B cell (primary cell): ENCODE measurements at regions of chr4 and their contacts with region 1.

Region 1: GRCh38 chr4:163663454-163664225 is 169.2 kb downstream of the TMA16 start:
- DNase-seq: peak; percentile 84
- ATAC-seq: peak; percentile 71
- H3K4me3 ChIP-seq: peak overlapping the region in 3 of 5 experiments; percentile 6 to 48 (median 32)
- H3K4me3 Mint-ChIP-seq: peak overlapping the region; percentile 84
- H3K27ac ChIP-seq: peak overlapping the region; percentile 93 to 94
- H3K27ac Mint-ChIP-seq: peak overlapping the region; percentile 98
- H3K4me1 ChIP-seq: peaks cover 69 to 72% of the 10 kb centered on the region in 2 donors
- H3K4me1 Mint-ChIP-seq: peaks cover 75% of the 10 kb centered on the region
- H3K27me3 ChIP-seq: no peaks in the 10 kb centered on the region
- H3K27me3 Mint-ChIP-seq: no peaks in the 10 kb centered on the region
- CTCF ChIP-seq: no peak

Region 2: GRCh38 chr4:162046135-162046534 is 1617.5 kb before region 1 on chr4:
- CTCF ChIA-PET with region 1: no interaction called
- POLR2A ChIA-PET with region 1: no interaction called
- intact Hi-C with region 1: no loop called
- DNase-seq: no peak
- ATAC-seq: no peak
- H3K4me3 ChIP-seq: no peak overlapping the region
- H3K4me3 Mint-ChIP-seq: no peak overlapping the region
- H3K27ac ChIP-seq: no peak overlapping the region
- H3K27ac Mint-ChIP-seq: no peak overlapping the region
- H3K4me1 ChIP-seq: no peaks in the 10 kb centered on the region
- H3K4me1 Mint-ChIP-seq: no peaks in the 10 kb centered on the region
- H3K27me3 ChIP-seq: no peaks in the 10 kb centered on the region
- H3K27me3 Mint-ChIP-seq: no peaks in the 10 kb centered on the region
- CTCF ChIP-seq: no peak

Region 3: GRCh38 chr4:163048447-163048846 is 615.2 kb before region 1 on chr4:
- CTCF ChIA-PET with region 1: no interaction called
- POLR2A ChIA-PET with region 1: no interaction called
- intact Hi-C with region 1: no loop called
- DNase-seq: peak; percentile 27
- ATAC-seq: peak; percentile 17
- H3K4me3 ChIP-seq: no peak overlapping the region
- H3K4me3 Mint-ChIP-seq: no peak overlapping the region
- H3K27ac ChIP-seq: no peak overlapping the region
- H3K27ac Mint-ChIP-seq: no peak overlapping the region
- H3K4me1 ChIP-seq: no peaks in the 10 kb centered on the region
- H3K4me1 Mint-ChIP-seq: no peaks in the 10 kb centered on the region
- H3K27me3 ChIP-seq: no peaks in the 10 kb centered on the region
- H3K27me3 Mint-ChIP-seq: peaks cover 13% of the 10 kb centered on the region
- CTCF ChIP-seq: peak; percentile 66

Region 4: GRCh38 chr4:163166041-163166579 is 497.5 kb before region 1 on chr4:
- CTCF ChIA-PET with region 1: no interaction called
- POLR2A ChIA-PET with region 1: no interaction called
- intact Hi-C with region 1: loop called (anchors 5 kb)
- DNase-seq: peak; percentile 78
- ATAC-seq: peak; percentile 56
- H3K4me3 ChIP-seq: peak overlapping the region; percentile 73 to 86 (median 83)
- H3K4me3 Mint-ChIP-seq: peak overlapping the region; percentile 97
- H3K27ac ChIP-seq: peak overlapping the region; percentile 91 to 94
- H3K27ac Mint-ChIP-seq: peak overlapping the region; percentile 98
- H3K4me1 ChIP-seq: peaks cover 15 to 18% of the 10 kb centered on the region in 2 donors
- H3K4me1 Mint-ChIP-seq: peaks cover 39% of the 10 kb centered on the region
- H3K27me3 ChIP-seq: no peaks in the 10 kb centered on the region
- H3K27me3 Mint-ChIP-seq: no peaks in the 10 kb centered on the region
- CTCF ChIP-seq: no peak

Region 5: DNA sequence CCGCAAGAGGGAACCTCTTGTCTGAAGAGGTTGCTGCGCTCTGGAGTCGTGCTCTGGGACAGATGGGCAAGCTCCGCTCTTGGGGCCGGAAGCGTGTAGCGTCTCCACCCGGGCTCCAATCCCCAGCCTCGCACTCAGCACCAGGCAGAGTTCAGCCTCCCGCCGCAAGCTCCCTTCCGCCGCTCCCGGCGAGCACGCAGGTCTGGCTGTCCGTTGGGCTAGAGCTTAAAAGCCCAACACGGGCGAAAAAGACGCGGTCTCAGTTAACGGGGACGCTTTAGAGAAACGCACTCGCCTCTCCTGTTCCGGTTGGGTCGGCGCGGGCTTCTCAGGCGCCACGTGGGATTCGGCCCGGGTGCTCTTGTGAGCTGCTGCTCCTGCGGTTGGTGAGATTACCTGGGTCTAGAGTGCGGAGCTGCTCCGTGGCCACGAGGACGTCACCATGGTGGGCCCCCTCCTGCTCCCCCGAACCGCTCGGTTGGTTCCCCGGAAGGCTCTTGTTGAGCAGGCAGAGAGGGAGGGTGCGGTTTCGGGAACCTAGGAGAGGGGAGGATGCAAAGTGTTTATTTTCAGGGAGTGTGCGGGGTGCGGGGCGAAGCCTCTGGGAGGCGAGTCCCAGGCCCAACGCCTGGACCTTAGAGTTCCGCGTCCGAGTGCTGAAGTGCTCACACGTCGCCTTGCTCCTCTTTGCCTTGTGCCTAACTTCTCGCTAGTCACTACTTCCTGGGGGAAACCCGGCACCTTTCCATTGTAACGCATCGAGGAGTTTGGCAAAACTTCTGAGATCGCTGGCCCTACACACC is 169.1 kb before region 1 on chr4 and contains the start of gene TMA16:
- CTCF ChIA-PET with region 1: interaction called, 3 read pairs
- POLR2A ChIA-PET with region 1: interaction called, 6 read pairs
- intact Hi-C with region 1: loop called (anchors 2 kb)
- DNase-seq: peak; percentile 90
- ATAC-seq: peak; percentile 67
- H3K4me3 ChIP-seq: peak within 1 kb of the TSS; percentile 68 to 99 (median 96)
- H3K4me3 Mint-ChIP-seq: peak within 1 kb of the TSS; percentile 99
- H3K27ac ChIP-seq: peak within 1 kb of the TSS; percentile 80 to 81
- H3K27ac Mint-ChIP-seq: peak within 1 kb of the TSS; percentile 100
- H3K4me1 ChIP-seq: peaks cover 21 to 28% of the 10 kb centered on the region in 2 donors
- H3K4me1 Mint-ChIP-seq: peaks cover 42% of the 10 kb centered on the region
- H3K27me3 ChIP-seq: no peaks in the 10 kb centered on the region
- H3K27me3 Mint-ChIP-seq: no peaks in the 10 kb centered on the region
- CTCF ChIP-seq: no peak
- total RNA-seq, gene TMA16: 40.5 and 49.0 TPM in 2 replicates

Region 6: DNA sequence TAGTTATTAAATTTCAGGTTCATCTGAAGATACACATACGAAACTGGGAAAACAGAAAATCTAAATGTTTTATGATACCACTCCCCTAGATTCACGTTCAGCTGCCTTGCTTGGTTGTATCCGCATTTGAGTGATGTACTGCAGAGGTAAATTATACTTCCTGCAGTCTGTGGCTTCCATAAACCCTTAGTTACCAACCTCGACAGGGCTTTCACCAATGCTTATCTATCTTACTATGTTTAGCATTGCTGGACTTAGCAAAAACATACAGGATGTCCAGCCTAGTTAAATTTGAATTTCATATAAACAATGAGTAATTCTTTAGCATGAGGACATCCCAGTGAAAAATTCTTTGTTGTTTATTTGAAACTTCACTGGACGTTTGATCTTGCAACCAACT is 60.4 kb before region 1 on chr4:
- CTCF ChIA-PET with region 1: interaction called, 15 read pairs
- POLR2A ChIA-PET with region 1: interaction called, 8 read pairs
- intact Hi-C with region 1: no loop called
- DNase-seq: peak; percentile 27
- ATAC-seq: no peak
- H3K4me3 ChIP-seq: peak overlapping the region in 4 of 5 experiments; percentile 7 to 60 (median 36)
- H3K4me3 Mint-ChIP-seq: peak overlapping the region; percentile 89
- H3K27ac ChIP-seq: peak overlapping the region; percentile 16 to 89
- H3K27ac Mint-ChIP-seq: peak overlapping the region; percentile 96
- H3K4me1 ChIP-seq: peaks cover 72 to 84% of the 10 kb centered on the region in 2 donors
- H3K4me1 Mint-ChIP-seq: peaks cover 82% of the 10 kb centered on the region
- H3K27me3 ChIP-seq: no peaks in the 10 kb centered on the region
- H3K27me3 Mint-ChIP-seq: no peaks in the 10 kb centered on the region
- CTCF ChIP-seq: no peak

Region 7: GRCh38 chr4:163622379-163623035 is 41.1 kb before region 1 on chr4:
- CTCF ChIA-PET with region 1: no interaction called
- POLR2A ChIA-PET with region 1: no interaction called
- intact Hi-C with region 1: no loop called
- DNase-seq: no peak
- ATAC-seq: no peak
- H3K4me3 ChIP-seq: no peak overlapping the region
- H3K4me3 Mint-ChIP-seq: no peak overlapping the region
- H3K27ac ChIP-seq: no peak overlapping the region
- H3K27ac Mint-ChIP-seq: no peak overlapping the region
- H3K4me1 ChIP-seq: no peaks in the 10 kb centered on the region
- H3K4me1 Mint-ChIP-seq: peaks cover 12% of the 10 kb centered on the region
- H3K27me3 ChIP-seq: no peaks in the 10 kb centered on the region
- H3K27me3 Mint-ChIP-seq: no peaks in the 10 kb centered on the region
- CTCF ChIP-seq: no peak

Region 8: GRCh38 chr4:163673848-163674697 is 10.4 kb after region 1 on chr4:
- CTCF ChIA-PET with region 1: interaction called, 96 read pairs
- POLR2A ChIA-PET with region 1: interaction called, 7 read pairs
- intact Hi-C with region 1: loop called (anchors 1 kb)
- DNase-seq: peak; percentile 64
- ATAC-seq: peak; percentile 83
- H3K4me3 ChIP-seq: peak overlapping the region in 3 of 5 experiments; percentile 0 to 34 (median 12)
- H3K4me3 Mint-ChIP-seq: peak overlapping the region; percentile 78
- H3K27ac ChIP-seq: peak overlapping the region; percentile 34 to 83
- H3K27ac Mint-ChIP-seq: peak overlapping the region; percentile 92
- H3K4me1 ChIP-seq: peaks cover 26 to 50% of the 10 kb centered on the region in 2 donors
- H3K4me1 Mint-ChIP-seq: peaks cover 48% of the 10 kb centered on the region
- H3K27me3 ChIP-seq: no peaks in the 10 kb centered on the region
- H3K27me3 Mint-ChIP-seq: no peaks in the 10 kb centered on the region
- CTCF ChIP-seq: no peak

Region 9: DNA sequence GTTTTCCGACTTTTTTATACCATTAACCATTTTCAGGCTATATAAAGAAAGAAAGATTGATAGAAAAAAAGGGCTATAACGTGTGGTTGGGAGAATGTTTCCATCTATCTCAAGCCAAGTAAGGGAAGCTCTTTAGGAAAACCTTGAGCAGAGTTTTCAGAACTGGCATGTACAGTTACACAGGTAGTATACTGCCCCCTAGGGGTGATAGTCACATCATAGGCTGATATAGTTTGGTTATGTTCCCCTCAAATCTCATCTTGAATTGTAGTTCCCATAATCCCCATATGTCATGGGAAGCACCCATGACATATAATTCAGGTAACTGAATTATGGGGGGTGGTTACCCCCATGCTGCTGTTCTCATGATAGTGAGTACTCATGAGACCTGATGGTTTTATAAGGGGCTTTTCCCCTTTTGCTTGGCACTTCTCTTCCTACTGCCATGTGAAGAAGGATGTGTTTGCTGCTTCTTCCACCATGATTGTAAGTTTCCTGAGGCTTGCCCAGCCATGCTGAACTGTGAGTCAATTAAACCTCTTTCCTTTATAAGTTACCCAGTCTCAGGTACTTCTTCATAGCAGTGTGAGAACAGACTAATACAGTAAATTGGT is 17.7 kb after region 1 on chr4:
- CTCF ChIA-PET with region 1: interaction called, 96 read pairs
- POLR2A ChIA-PET with region 1: interaction called, 4 read pairs
- intact Hi-C with region 1: loop called (anchors 2 kb)
- DNase-seq: peak; percentile 80
- ATAC-seq: peak; percentile 85
- H3K4me3 ChIP-seq: no peak overlapping the region
- H3K4me3 Mint-ChIP-seq: no peak overlapping the region
- H3K27ac ChIP-seq: no peak overlapping the region
- H3K27ac Mint-ChIP-seq: peak overlapping the region; percentile 74
- H3K4me1 ChIP-seq: peaks cover 6 to 11% of the 10 kb centered on the region in 2 donors
- H3K4me1 Mint-ChIP-seq: peaks cover 24% of the 10 kb centered on the region
- H3K27me3 ChIP-seq: no peaks in the 10 kb centered on the region
- H3K27me3 Mint-ChIP-seq: no peaks in the 10 kb centered on the region
- CTCF ChIP-seq: peak; percentile 87